AG04449 (cell line): ENCODE measurements at regions of chr7 and their contacts with region 1.

Region 1: DNA sequence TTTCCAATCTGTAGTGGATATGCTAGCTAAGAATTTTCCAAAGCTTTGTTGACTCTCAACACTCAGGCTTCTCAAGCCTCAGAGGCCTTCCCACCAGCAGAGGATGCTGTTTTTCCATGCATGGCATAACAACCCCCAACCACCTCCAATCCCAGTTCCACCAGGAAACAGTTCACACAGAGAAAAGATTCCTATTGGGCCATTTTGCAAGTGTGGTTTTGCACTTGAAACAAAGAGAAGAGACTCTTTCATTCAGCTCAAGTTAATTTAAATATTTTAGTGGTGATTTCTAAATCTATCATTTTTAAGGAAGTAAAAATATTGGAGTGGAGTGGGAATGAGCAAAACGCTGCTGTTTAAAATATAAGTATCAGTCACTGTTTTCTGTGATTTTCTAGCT is 105.6 kb upstream of the COL1A2 start:
- DNase-seq: no peak
- H3K4me3 ChIP-seq: no peak overlapping the region
- CTCF ChIP-seq: peak; percentile 95

Region 2: DNA sequence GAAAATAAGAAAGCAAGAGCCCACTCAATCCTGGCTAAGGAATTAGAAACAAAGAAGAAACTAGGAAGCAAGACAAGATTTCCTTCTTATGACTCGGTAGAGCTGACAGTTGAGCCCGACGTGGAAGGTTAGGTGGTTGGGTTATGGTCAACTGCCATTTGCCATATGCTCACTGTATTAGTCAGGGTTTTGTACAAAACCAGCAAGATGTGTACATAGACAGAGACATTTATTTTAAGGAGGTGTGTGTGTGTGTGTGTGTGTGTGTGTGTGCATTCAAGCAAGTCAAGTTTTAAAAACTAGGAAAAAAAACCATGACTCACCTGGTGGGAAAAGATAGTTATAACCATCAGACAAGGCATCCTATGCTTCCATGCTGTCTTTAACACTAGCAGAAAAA is 898.4 kb before region 1 on chr7:
- CTCF ChIA-PET with region 1: no interaction called
- POLR2A ChIA-PET with region 1: no interaction called
- DNase-seq: no peak
- H3K4me3 ChIP-seq: no peak overlapping the region
- CTCF ChIP-seq: no peak

Region 3: GRCh38 chr7:94041529-94041928 is 247.5 kb before region 1 on chr7:
- CTCF ChIA-PET with region 1: no interaction called
- POLR2A ChIA-PET with region 1: no interaction called
- DNase-seq: peak; percentile 17
- H3K4me3 ChIP-seq: no peak overlapping the region
- CTCF ChIP-seq: no peak

Region 4: DNA sequence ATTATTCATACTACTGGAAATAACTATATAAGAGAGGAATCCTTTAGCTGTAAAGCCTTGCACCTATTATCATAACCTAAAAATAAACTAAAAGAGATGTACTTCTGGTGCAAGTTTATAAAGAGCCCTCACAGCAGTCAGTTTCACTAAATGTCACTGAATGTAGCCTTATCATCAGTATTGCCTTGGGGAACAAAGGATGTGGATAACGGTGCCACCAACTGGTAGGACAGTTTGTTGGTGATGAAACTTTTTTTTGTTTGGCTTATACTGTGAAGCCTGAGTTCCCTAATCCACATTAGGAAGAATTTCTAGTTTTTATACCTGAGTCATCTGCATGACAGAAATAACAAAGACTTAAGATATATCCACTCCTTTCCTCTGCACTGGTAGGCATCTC is 12.3 kb before region 1 on chr7:
- CTCF ChIA-PET with region 1: interaction called, 27 read pairs
- POLR2A ChIA-PET with region 1: no interaction called
- DNase-seq: no peak
- H3K4me3 ChIP-seq: no peak overlapping the region
- CTCF ChIP-seq: peak; percentile 47

Region 5: DNA sequence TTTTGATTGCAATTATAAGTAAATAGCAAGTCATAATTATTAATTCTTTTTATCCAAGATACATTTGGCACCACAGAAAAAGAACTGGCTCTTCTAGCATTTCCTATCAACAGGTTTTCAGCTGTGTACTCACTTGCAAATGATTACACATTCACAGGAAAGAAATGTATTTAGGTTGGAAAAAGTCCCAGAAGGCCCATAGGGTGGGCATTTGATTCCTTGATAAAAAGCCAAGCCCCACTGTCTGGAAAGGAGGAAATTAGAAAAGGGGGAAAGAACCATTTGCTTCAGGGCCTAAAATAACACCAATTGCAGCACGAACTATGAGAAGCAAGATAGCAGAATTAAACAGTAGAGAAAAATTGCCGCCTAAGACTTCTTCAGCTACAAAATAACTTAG is 24.9 kb after region 1 on chr7:
- CTCF ChIA-PET with region 1: interaction called, 10 read pairs
- POLR2A ChIA-PET with region 1: no interaction called
- DNase-seq: no peak
- H3K4me3 ChIP-seq: no peak overlapping the region
- CTCF ChIP-seq: no peak

Region 6: GRCh38 chr7:94395141-94396036 is 106.3 kb after region 1 on chr7:
- CTCF ChIA-PET with region 1: interaction called, 545 read pairs
- POLR2A ChIA-PET with region 1: interaction called, 691 read pairs
- DNase-seq: no peak
- H3K4me3 ChIP-seq: peak overlapping the region; percentile 73
- CTCF ChIP-seq: peak; percentile 57

Region 7: DNA sequence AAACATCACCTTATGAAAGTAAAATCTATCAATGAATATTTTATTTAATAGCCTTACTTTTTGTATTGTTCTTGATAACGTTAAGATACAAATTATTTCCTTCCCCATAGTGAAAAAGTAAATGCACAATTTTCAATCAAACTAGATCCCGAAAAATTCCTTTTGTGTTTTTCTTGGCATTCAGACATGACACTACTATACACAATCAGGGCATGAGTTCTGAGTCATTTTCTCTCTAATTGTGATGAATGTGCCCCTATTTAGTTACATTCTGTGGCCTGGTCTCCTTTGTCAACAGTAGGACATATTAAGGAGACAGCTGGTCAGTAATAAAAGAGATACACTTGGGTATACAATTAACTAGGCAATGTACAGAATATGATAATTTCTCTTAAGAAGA is 125.4 kb after region 1 on chr7:
- CTCF ChIA-PET with region 1: interaction called, 38 read pairs
- POLR2A ChIA-PET with region 1: interaction called, 72 read pairs
- DNase-seq: no peak
- H3K4me3 ChIP-seq: no peak overlapping the region
- CTCF ChIP-seq: no peak

Region 8: GRCh38 chr7:94436018-94436604 is 147.0 kb after region 1 on chr7:
- CTCF ChIA-PET with region 1: interaction called, 788 read pairs
- POLR2A ChIA-PET with region 1: interaction called, 46 read pairs
- DNase-seq: no peak
- H3K4me3 ChIP-seq: no peak overlapping the region
- CTCF ChIP-seq: peak; percentile 69